H1 (cell line): ENCODE measurements at regions of chr18 and their contacts with region 1.

Region 1: DNA sequence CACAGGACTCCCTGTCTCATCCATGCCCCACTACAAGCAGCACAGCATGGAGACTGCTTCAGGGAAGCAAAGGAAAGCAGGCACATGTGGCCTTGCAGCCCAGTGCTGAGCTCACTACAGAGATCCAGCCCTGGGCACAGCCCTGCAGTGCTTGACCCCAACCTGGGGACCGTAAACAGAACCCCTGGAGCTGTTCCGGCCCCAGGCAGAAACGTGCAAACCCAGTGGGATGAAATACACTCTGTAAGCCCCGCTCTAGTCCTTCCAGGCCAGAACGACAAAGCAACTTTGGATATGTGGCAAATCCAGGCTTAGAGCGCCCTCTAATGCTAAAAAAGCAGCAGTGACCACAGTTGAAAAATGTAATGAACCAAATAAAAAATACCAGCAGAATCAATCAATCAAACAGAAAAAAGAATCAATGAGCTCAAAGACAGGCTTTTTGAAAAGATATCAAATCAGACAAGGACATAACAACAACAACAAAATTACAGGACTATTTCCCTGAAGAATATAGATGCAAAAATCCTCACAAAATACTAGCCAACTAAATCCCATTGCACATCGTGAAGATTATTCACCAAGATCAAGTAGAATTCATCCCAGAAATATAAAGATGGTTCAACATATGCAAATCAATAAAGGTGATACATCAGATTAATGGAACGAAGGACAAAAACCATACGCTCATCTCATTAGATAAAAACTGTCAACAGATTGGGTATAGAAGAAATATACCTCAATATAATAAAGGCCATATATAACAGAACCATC is 45.6 kb downstream of the ZNF519 start:
- DNase-seq: peak; percentile 34 to 60
- H3K4me3 ChIP-seq: no peak overlapping the region
- H3K27ac ChIP-seq: no peak overlapping the region
- H3K4me1 ChIP-seq: peaks cover 0 to 7% (median 4%) of the 10 kb centered on the region in 4 experiments; a peak in 5 of 7 replicates
- H3K27me3 ChIP-seq: no peaks in the 10 kb centered on the region
- CTCF ChIP-seq: peak in 2 of 3 experiments; percentile 78 to 86; a peak in 3 of 4 replicates
- EP300 ChIP-seq: no peak
- POLR2A ChIP-seq: no peak
- RAD21 ChIP-seq: peak; percentile 98

Region 2: DNA sequence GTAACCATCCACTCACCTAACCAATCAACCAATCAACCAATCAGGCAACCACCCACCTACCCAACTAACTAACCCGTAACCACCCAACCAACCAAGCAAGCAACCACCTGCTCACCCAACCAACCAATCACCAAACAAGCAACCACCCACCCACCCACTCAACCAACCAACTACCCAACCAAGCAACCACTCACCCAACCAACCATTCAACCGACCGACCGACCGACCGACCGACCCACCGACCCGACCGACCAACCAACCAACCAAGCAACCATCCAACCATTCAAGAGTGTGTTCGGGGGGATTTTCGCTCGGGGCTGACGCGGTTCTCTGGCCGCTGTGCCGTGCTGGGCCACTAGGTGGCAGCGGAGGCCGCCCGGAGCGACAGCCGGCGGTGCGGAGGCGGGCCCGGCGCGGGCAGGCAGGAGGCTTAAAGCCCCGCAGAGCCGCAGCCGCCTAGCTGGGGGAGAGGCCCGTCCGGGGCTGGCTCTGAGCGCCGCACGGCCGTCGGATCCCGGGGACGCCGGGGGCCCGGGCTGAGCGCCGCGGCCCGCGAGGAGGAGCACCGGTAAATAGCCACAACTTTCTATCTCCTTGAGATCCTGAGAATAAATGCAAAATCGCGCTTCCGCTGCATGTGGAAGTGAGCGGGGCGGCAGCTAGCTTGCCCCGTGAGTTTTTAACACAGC is 262.8 kb before region 1 on chr18 and contains the start of gene MC5R:
- CTCF ChIA-PET with region 1: interaction called, 35 read pairs
- POLR2A ChIA-PET with region 1: interaction called, 3 read pairs
- DNase-seq: peak in 1 of 2 experiments; percentile 95
- H3K4me3 ChIP-seq: peak within 1 kb of the TSS in 3 of 4 experiments; percentile 27 to 55 (median 48); a peak in 5 of 8 replicates
- H3K27ac ChIP-seq: no peak within 1 kb of the TSS
- H3K4me1 ChIP-seq: peaks cover 0 to 2% (median 0%) of the 10 kb centered on the region in 4 experiments; a peak in 1 of 7 replicates
- H3K27me3 ChIP-seq: no peaks in the 10 kb centered on the region
- CTCF ChIP-seq: peak; percentile 82 to 93 (median 90)
- EP300 ChIP-seq: no peak
- POLR2A ChIP-seq: no peak
- RAD21 ChIP-seq: peak; percentile 90 to 95
- total RNA-seq, gene MC5R: 0.31 and 0.37 TPM in 2 replicates

Region 3: GRCh38 chr18:13831864-13832508 is 254.7 kb before region 1 on chr18:
- CTCF ChIA-PET with region 1: interaction called, 68 read pairs
- POLR2A ChIA-PET with region 1: no interaction called
- DNase-seq: no peak
- H3K4me3 ChIP-seq: no peak overlapping the region
- H3K27ac ChIP-seq: no peak overlapping the region
- H3K4me1 ChIP-seq: 0 out of 7 replicates have a peak, but pooled peaks cover 0 to 3% (median 0%) of the 10 kb centered on the region in 4 experiments
- H3K27me3 ChIP-seq: no peaks in the 10 kb centered on the region
- CTCF ChIP-seq: peak in 2 of 3 experiments; percentile 36 to 52; a peak in 2 of 4 replicates
- EP300 ChIP-seq: no peak
- POLR2A ChIP-seq: no peak
- RAD21 ChIP-seq: peak; percentile 61 to 71

Region 4: GRCh38 chr18:14144628-14144895 is 57.9 kb after region 1 on chr18:
- CTCF ChIA-PET with region 1: no interaction called
- POLR2A ChIA-PET with region 1: no interaction called
- DNase-seq: no peak
- H3K4me3 ChIP-seq: no peak overlapping the region
- H3K27ac ChIP-seq: no peak overlapping the region
- H3K4me1 ChIP-seq: no peaks in the 10 kb centered on the region
- H3K27me3 ChIP-seq: no peaks in the 10 kb centered on the region
- CTCF ChIP-seq: no peak
- EP300 ChIP-seq: no peak
- POLR2A ChIP-seq: no peak
- RAD21 ChIP-seq: no peak